Activated CD4-positive, alpha-beta memory T cell treated with anti-CD3 and anti-CD28 coated beads for 36 hours (primary cell): ENCODE measurements at regions of chr5 and their contacts with region 1.

Region 1: GRCh38 chr5:14644623-14645237 is 19.8 kb upstream of the OTULIN start:
- DNase-seq: no peak
- H3K4me3 Mint-ChIP-seq: no peak overlapping the region
- H3K27ac Mint-ChIP-seq: no peak overlapping the region
- H3K4me1 Mint-ChIP-seq: no peaks in the 10 kb centered on the region
- H3K27me3 Mint-ChIP-seq: peaks cover 17% of the 10 kb centered on the region

Region 2: DNA sequence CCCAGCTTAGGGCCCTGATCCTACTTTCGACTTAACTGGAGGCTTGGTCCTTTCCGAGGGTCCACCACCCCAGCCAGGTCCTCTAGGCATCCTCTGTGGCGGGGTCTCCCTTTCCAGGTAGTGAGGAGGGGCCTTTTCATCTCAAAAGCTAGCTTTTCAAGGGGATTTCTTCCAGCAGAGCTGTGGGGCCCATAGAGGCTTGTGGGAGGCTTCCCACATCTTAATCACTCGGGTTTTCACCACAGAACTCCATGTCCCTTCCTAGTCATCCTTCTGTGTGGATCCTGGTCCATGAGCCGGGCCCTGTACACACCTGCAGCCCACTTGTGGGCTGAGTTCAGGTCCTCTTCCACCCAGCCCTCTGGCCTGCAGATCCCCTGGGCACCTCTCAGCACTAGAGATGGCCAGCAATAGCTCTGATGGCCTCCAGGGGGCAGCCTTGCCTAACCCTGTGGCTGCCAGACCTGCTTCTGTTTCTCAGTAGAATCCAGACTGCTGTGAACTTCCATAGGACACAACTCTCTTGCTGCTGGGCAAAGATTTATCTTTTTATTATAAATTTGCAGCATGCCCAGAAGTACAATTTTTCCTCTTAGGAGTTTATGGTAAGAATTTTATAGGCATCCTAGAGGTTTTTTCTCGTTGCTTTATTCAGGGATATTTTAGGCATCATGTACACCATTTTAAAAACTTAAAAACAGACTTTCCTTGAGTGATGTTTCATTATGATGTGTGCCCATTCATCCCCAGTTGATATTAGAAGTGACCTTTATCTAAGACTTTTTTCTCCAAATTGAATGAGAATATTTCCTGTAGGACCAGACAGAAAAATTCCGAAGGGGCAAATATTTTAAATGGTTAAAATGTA is 292.7 kb before region 1 on chr5:
- CTCF ChIA-PET with region 1: interaction called, 59 read pairs
- POLR2A ChIA-PET with region 1: no interaction called
- intact Hi-C with region 1: loop called (anchors 1 kb)
- DNase-seq: peak; percentile 69
- H3K4me3 Mint-ChIP-seq: no peak overlapping the region
- H3K27ac Mint-ChIP-seq: no peak overlapping the region
- H3K4me1 Mint-ChIP-seq: no peaks in the 10 kb centered on the region
- H3K27me3 Mint-ChIP-seq: peaks cover 5% of the 10 kb centered on the region

Region 3: DNA sequence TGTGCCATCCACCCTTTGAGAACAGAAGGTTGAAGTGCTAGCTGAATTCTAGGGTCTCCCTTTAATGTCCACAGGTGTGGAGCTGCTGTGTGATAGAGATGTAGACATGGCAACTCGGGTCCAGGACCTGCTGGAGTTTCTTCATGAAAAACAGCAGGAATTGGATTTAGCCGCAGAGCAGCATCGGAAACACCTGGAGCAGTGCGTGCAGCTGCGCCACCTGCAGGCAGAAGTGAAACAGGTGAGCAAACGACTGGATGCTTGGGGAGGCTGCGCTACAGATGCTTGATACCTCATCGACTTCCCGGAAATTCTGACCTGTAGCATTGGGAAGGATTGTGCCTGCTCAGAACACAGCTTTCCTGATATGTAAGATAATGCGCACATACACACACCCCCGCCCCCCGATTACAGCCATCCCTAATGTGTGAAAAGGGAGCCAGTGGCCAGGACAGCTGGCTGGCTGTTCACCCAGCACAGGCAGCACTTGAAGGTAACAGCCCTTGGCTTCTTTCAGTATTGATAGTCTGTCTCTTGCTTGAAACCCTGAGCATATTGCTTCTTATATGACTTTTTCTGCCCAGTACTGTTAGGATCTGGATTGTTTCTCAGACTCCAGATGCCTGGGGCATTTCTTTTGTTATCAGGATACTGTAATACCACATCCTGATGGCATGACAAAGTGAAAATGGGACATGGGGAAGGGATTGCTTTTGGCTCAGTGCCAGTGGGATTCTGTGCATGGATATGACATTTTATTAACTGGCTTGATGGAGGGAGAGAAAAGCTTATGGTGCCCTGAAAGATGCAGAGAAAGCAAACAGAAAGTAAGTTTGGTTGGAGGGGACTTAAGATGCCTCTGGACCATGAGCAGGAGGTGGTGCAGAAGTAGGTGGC is 279.9 kb before region 1 on chr5:
- CTCF ChIA-PET with region 1: interaction called, 138 read pairs
- POLR2A ChIA-PET with region 1: no interaction called
- intact Hi-C with region 1: loop called (anchors 1 kb)
- DNase-seq: peak; percentile 19
- H3K4me3 Mint-ChIP-seq: no peak overlapping the region
- H3K27ac Mint-ChIP-seq: no peak overlapping the region
- H3K4me1 Mint-ChIP-seq: peaks cover 18% of the 10 kb centered on the region
- H3K27me3 Mint-ChIP-seq: no peaks in the 10 kb centered on the region

Region 4: DNA sequence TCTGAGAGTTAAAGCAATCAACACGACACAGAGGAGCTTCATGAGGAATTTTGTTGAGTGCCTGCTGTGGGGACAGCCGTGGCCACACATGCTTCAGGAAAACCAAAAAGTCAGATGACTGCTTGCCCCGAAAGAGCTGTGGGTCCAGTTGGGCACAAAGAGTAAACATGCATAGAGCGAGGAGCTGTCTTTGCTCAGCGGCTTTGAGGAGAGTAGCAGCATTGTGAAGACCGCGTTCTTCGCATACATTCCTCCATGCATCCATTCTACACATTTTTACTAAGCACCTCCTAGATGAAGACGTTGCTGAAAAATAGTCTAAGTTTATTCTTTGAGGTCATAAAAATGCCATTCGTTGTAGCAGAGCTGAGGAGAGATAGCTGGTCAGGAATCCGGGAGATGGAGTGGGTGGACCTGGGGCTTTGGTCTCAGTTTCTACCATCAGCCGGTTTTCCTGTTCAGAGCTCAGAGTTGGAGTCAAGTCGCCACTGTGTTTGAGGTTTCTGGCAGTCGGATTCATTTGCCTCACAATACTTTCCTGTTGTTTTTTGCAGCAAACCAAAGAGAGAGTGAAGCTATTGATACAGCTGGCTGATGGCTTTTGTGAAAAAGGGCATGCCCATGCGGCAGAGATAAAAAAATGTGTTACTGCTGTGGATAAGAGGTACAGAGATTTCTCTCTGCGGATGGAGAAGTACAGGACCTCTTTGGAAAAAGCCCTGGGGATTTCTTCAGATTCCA is 257.7 kb before region 1 on chr5:
- CTCF ChIA-PET with region 1: interaction called, 11 read pairs
- POLR2A ChIA-PET with region 1: no interaction called
- intact Hi-C with region 1: no loop called
- DNase-seq: no peak
- H3K4me3 Mint-ChIP-seq: no peak overlapping the region
- H3K27ac Mint-ChIP-seq: no peak overlapping the region
- H3K4me1 Mint-ChIP-seq: no peaks in the 10 kb centered on the region
- H3K27me3 Mint-ChIP-seq: peaks cover 5% of the 10 kb centered on the region

Region 5: DNA sequence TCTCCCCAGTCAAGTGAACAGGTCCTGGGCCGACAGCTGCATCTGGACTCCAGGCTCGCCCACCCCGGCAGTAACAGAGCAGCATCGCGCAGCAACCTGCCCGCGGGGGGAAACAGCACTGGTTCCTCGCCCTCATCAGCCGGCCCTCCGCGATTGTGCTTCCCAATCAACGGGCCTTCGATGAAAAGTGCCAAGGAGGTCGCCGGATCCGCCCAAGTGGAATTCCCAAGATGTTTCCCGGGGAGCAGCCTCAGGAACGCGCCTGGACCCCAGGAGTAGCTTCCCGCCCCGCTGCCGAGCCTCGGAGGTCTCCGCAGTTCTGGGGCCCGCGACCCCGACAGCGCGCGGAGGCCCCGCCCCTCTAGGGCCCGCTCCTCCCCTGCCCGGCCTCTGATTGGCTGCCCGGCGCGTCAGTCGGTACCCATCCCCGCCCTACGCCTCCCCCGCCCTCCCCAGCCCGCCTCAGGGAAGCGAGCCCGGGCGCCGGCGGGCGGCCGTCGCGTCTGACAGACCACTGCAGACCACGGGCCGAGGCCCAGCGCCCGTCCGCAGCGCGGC is 63.3 kb before region 1 on chr5 and contains the start of gene OTULINL:
- CTCF ChIA-PET with region 1: interaction called, 17 read pairs
- POLR2A ChIA-PET with region 1: interaction called, 4 read pairs
- intact Hi-C with region 1: loop called (anchors 5 kb)
- DNase-seq: peak; percentile 91
- H3K4me3 Mint-ChIP-seq: peak within 1 kb of the TSS; percentile 77
- H3K27ac Mint-ChIP-seq: no peak within 1 kb of the TSS
- H3K4me1 Mint-ChIP-seq: peaks cover 27% of the 10 kb centered on the region
- H3K27me3 Mint-ChIP-seq: peaks cover 9% of the 10 kb centered on the region
- total RNA-seq, gene OTULINL: 12.2 to 12.3 TPM